ENCODE measurements at regions of chr4 and their contacts with region 1.

Region 1: GRCh38 chr4:114386637-114387233 is 211.9 kb upstream of the UGT8 start:
- DNase-seq: no peak
- H3K4me3 ChIP-seq: no peak overlapping the region
- H3K27ac ChIP-seq: no peak overlapping the region
- H3K4me1 ChIP-seq: peaks cover 0 to 8% (median 0%) of the 10 kb centered on the region in 4 donors
- H3K27me3 ChIP-seq: no peaks in the 10 kb centered on the region
- CTCF ChIP-seq: peak in 3 of 4 experiments; percentile 33 to 56 (median 45)
- EP300 ChIP-seq: no peak
- POLR2A ChIP-seq: no peak

Region 2: GRCh38 chr4:113781439-113782040 is 605.2 kb before region 1 on chr4:
- intact Hi-C with region 1: loop called (anchors 10 kb)
- DNase-seq: no peak
- H3K4me3 ChIP-seq: no peak overlapping the region
- H3K27ac ChIP-seq: no peak overlapping the region
- H3K4me1 ChIP-seq: peaks cover 0 to 3% (median 0%) of the 10 kb centered on the region in 4 donors
- H3K27me3 ChIP-seq: no peaks in the 10 kb centered on the region
- CTCF ChIP-seq: peak in 3 of 4 experiments; percentile 20 to 63 (median 59)
- EP300 ChIP-seq: no peak
- POLR2A ChIP-seq: no peak

Region 3: GRCh38 chr4:113952452-113953029 is 434.2 kb before region 1 on chr4:
- intact Hi-C with region 1: loop called (anchors 10 kb)
- DNase-seq: no peak
- H3K4me3 ChIP-seq: no peak overlapping the region
- H3K27ac ChIP-seq: no peak overlapping the region
- H3K4me1 ChIP-seq: peaks cover 0 to 46% (median 26%) of the 10 kb centered on the region in 4 donors
- H3K27me3 ChIP-seq: no peaks in the 10 kb centered on the region
- CTCF ChIP-seq: peak; percentile 12 to 81 (median 62)
- EP300 ChIP-seq: no peak
- POLR2A ChIP-seq: no peak

Region 4: GRCh38 chr4:114694770-114695169 is 308.0 kb after region 1 on chr4:
- intact Hi-C with region 1: loop called (anchors 10 kb)
- DNase-seq: no peak
- H3K4me3 ChIP-seq: no peak overlapping the region
- H3K27ac ChIP-seq: no peak overlapping the region
- H3K4me1 ChIP-seq: no peaks in the 10 kb centered on the region
- H3K27me3 ChIP-seq: no peaks in the 10 kb centered on the region
- CTCF ChIP-seq: peak in 3 of 4 experiments; percentile 15 to 44 (median 38)
- EP300 ChIP-seq: no peak
- POLR2A ChIP-seq: no peak

Measured in sigmoid colon (tissue), 7 donors.